Naive thymus-derived CD4-positive, alpha-beta T cell (primary cell): ENCODE measurements at regions of chr10 and their contacts with region 1.

Region 1: DNA sequence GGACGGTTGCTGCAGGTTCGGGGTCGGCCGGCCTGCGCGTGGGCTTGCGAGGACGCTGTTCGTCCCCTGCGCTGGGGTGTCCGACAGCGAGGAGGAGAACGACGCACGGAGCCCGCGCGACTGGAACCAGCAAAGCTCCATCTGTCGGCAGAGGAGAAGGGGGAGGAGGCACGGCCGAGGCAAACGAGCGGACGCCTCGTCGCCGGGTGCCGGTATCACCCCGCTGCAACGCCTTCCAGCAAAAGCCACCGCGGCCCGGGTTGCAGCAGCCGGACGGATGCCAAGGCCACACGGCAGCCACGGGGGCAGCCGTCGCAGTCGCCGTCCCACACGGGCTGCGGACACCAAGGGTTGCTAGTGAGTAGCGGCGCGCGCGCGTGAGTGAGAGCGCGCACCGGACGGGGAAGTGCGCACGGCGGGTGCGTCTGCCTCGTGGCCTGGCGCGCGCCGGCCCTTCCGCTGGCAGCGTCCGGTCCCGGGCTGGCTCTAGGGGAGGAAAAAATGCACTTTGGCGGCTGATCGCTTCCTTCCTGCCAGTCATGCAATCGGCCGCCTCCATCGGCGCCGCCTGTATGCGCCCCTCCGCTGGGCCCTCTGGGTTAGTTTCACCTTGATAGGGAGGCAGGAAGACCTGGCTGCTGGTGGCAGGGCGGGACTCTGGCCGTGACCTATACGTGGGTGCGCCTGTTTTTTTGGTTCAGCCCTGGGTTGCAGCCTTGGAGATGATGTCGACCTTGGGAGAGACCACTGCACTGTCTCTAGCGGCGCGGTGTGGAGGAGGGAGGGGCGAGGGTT is 434 bp downstream of the STAMBPL1 start:
- DNase-seq: peak; percentile 58 to 79 (median 75)
- ATAC-seq: peak; percentile 84
- H3K4me3 ChIP-seq: peak overlapping the region; percentile 85
- H3K4me3 Mint-ChIP-seq: peak overlapping the region; percentile 95 to 100 (median 98)
- H3K27ac ChIP-seq: peak overlapping the region; percentile 74
- H3K27ac Mint-ChIP-seq: peak overlapping the region; percentile 82 to 97 (median 95)
- H3K4me1 ChIP-seq: peaks cover 43 to 44% of the 10 kb centered on the region in 2 donors
- H3K4me1 Mint-ChIP-seq: peaks cover 43 to 79% (median 69%) of the 10 kb centered on the region in 7 donors
- H3K27me3 ChIP-seq: no peaks in the 10 kb centered on the region
- H3K27me3 Mint-ChIP-seq: no peaks in the 10 kb centered on the region

Region 2: GRCh38 chr10:88582806-88583583 is 297.5 kb before region 1 on chr10 and contains the start of gene RNLS:
- CTCF ChIA-PET with region 1: no interaction called
- POLR2A ChIA-PET with region 1: interaction called, 7 read pairs
- intact Hi-C with region 1: loop called (anchors 2 to 5 kb)
- DNase-seq: peak; percentile 46 to 66 (median 62)
- ATAC-seq: peak; percentile 90
- H3K4me3 ChIP-seq: peak within 1 kb of the TSS; percentile 90
- H3K4me3 Mint-ChIP-seq: peak within 1 kb of the TSS; percentile 88 to 95 (median 90)
- H3K27ac ChIP-seq: peak within 1 kb of the TSS; percentile 80
- H3K27ac Mint-ChIP-seq: peak within 1 kb of the TSS; percentile 84 to 97 (median 91)
- H3K4me1 ChIP-seq: peaks cover 6 to 8% of the 10 kb centered on the region in 2 donors
- H3K4me1 Mint-ChIP-seq: peaks cover 8 to 16% (median 12%) of the 10 kb centered on the region in 7 donors
- H3K27me3 ChIP-seq: no peaks in the 10 kb centered on the region
- H3K27me3 Mint-ChIP-seq: peaks cover 0 to 19% (median 4%) of the 10 kb centered on the region in 5 donors
- total RNA-seq, gene RNLS: 1.5 to 3.6 (median 2.9) TPM

Region 3: GRCh38 chr10:88791924-88792323 is 88.6 kb before region 1 on chr10:
- CTCF ChIA-PET with region 1: no interaction called
- POLR2A ChIA-PET with region 1: no interaction called
- intact Hi-C with region 1: loop called in 1 of 2 experiments (anchors 1 kb)
- DNase-seq: no peak
- ATAC-seq: no peak
- H3K4me3 ChIP-seq: no peak overlapping the region
- H3K4me3 Mint-ChIP-seq: no peak overlapping the region
- H3K27ac ChIP-seq: no peak overlapping the region
- H3K27ac Mint-ChIP-seq: no peak overlapping the region
- H3K4me1 ChIP-seq: peaks cover 0 to 4% of the 10 kb centered on the region in 2 donors
- H3K4me1 Mint-ChIP-seq: peaks cover 4 to 22% (median 8%) of the 10 kb centered on the region in 7 donors
- H3K27me3 ChIP-seq: no peaks in the 10 kb centered on the region
- H3K27me3 Mint-ChIP-seq: peaks cover 0 to 37% (median 0%) of the 10 kb centered on the region in 5 donors

Region 4: GRCh38 chr10:88835096-88835909 is 45.2 kb before region 1 on chr10:
- CTCF ChIA-PET with region 1: interaction called, 9 read pairs
- POLR2A ChIA-PET with region 1: interaction called, 9 read pairs
- intact Hi-C with region 1: loop called (anchors 1 kb)
- DNase-seq: peak; percentile 65 to 86 (median 82)
- ATAC-seq: peak; percentile 95
- H3K4me3 ChIP-seq: no peak overlapping the region
- H3K4me3 Mint-ChIP-seq: no peak overlapping the region
- H3K27ac ChIP-seq: no peak overlapping the region
- H3K27ac Mint-ChIP-seq: no peak overlapping the region
- H3K4me1 ChIP-seq: peaks cover 14 to 46% of the 10 kb centered on the region in 2 donors
- H3K4me1 Mint-ChIP-seq: peaks cover 10 to 33% (median 32%) of the 10 kb centered on the region in 7 donors
- H3K27me3 ChIP-seq: no peaks in the 10 kb centered on the region
- H3K27me3 Mint-ChIP-seq: no peaks in the 10 kb centered on the region

Region 5: DNA sequence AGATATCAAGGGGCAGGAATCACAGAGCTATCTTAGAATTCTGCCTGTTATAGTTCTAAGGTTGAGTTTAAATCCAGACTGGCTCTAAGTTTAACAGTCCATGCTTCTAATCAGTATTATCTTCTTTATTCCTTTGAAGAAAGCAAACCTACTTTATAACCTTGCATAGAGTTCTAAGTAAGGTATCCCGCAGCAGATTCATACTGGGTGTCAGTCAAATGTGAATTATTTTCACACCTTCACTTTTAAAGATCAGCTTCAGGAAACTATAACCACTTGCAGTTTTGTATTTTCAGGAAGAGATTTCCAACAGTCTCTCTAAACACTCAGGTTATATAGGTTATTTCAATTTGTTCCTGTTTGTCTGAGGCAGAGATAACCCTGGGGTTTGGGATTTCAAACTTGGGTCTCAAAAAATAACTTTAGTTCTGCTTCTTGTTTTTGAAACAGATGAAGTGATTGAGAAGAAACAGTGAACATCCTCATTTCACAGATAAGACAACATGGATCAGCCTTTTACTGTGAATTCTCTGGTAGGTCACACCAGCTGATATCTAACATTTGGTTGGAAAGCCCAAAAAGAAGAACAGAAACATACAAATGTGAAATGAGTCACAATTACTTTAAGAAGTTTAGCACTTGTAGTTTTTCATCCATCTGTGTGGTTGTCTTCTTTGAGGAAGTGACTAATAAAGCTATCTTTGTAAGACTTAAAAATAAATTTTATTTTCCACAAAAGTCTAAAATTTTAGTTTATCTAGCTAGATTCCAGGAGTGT is 20.9 kb after region 1 on chr10:
- CTCF ChIA-PET with region 1: interaction called, 3 read pairs
- POLR2A ChIA-PET with region 1: interaction called, 4 read pairs
- intact Hi-C with region 1: loop called (anchors 1 to 2 kb)
- DNase-seq: no peak
- ATAC-seq: peak; percentile 84
- H3K4me3 ChIP-seq: no peak overlapping the region
- H3K4me3 Mint-ChIP-seq: peak overlapping the region in 1 of 10 donors; percentile 34
- H3K27ac ChIP-seq: no peak overlapping the region
- H3K27ac Mint-ChIP-seq: peak overlapping the region in 4 of 9 donors; percentile 43 to 60 (median 53)
- H3K4me1 ChIP-seq: peaks cover 15 to 24% of the 10 kb centered on the region in 2 donors
- H3K4me1 Mint-ChIP-seq: peaks cover 23 to 58% (median 40%) of the 10 kb centered on the region in 7 donors
- H3K27me3 ChIP-seq: no peaks in the 10 kb centered on the region
- H3K27me3 Mint-ChIP-seq: no peaks in the 10 kb centered on the region

Region 6: DNA sequence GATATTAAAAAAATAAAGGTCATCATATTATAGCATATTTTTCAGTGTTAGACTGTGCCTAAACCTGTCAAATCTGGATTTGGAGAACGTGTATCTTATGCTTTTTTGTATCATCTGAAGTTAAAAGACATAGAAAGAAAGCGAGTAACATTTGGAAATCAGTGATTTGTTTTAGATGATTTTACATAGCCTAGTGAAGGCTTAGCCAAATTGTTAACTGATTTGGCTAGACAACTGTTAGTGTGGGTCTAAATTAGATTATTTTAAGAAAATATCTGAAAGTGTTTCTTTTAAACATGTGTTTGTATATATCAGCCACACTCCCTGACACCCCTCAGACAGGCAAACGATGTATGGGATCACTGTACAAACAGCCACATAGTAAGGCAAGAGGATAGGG is 36.5 kb after region 1 on chr10:
- CTCF ChIA-PET with region 1: no interaction called
- POLR2A ChIA-PET with region 1: no interaction called
- intact Hi-C with region 1: no loop called
- DNase-seq: no peak
- ATAC-seq: no peak
- H3K4me3 ChIP-seq: no peak overlapping the region
- H3K4me3 Mint-ChIP-seq: no peak overlapping the region
- H3K27ac ChIP-seq: no peak overlapping the region
- H3K27ac Mint-ChIP-seq: no peak overlapping the region
- H3K4me1 ChIP-seq: no peaks in the 10 kb centered on the region
- H3K4me1 Mint-ChIP-seq: peaks cover 0 to 13% (median 0%) of the 10 kb centered on the region in 7 donors
- H3K27me3 ChIP-seq: no peaks in the 10 kb centered on the region
- H3K27me3 Mint-ChIP-seq: no peaks in the 10 kb centered on the region

Region 7: GRCh38 chr10:89047397-89047796 is 166.9 kb after region 1 on chr10:
- CTCF ChIA-PET with region 1: no interaction called
- POLR2A ChIA-PET with region 1: no interaction called
- intact Hi-C with region 1: no loop called
- DNase-seq: no peak
- ATAC-seq: no peak
- H3K4me3 ChIP-seq: no peak overlapping the region
- H3K4me3 Mint-ChIP-seq: no peak overlapping the region
- H3K27ac ChIP-seq: no peak overlapping the region
- H3K27ac Mint-ChIP-seq: no peak overlapping the region
- H3K4me1 ChIP-seq: no peaks in the 10 kb centered on the region
- H3K4me1 Mint-ChIP-seq: no peaks in the 10 kb centered on the region
- H3K27me3 ChIP-seq: no peaks in the 10 kb centered on the region
- H3K27me3 Mint-ChIP-seq: peaks cover 0 to 3% (median 0%) of the 10 kb centered on the region in 5 donors

Region 8: GRCh38 chr10:90447831-90448230 is 1567.4 kb after region 1 on chr10:
- CTCF ChIA-PET with region 1: no interaction called
- POLR2A ChIA-PET with region 1: no interaction called
- intact Hi-C with region 1: no loop called
- DNase-seq: no peak
- ATAC-seq: no peak
- H3K4me3 ChIP-seq: no peak overlapping the region
- H3K4me3 Mint-ChIP-seq: no peak overlapping the region
- H3K27ac ChIP-seq: no peak overlapping the region
- H3K27ac Mint-ChIP-seq: no peak overlapping the region
- H3K4me1 ChIP-seq: no peaks in the 10 kb centered on the region
- H3K4me1 Mint-ChIP-seq: no peaks in the 10 kb centered on the region
- H3K27me3 ChIP-seq: no peaks in the 10 kb centered on the region
- H3K27me3 Mint-ChIP-seq: peaks cover 0 to 3% (median 0%) of the 10 kb centered on the region in 5 donors